Tibial artery (tissue), 4 donors: ENCODE measurements at regions of chr7 and their contacts with region 1.

Region 1: GRCh38 chr7:332646-333392 is 42.8 kb downstream of the FOXL3 start:
- DNase-seq: peak in 1 of 2 donors; percentile 83
- H3K4me3 ChIP-seq: peak overlapping the region; percentile 37 to 47
- H3K27ac ChIP-seq: peak overlapping the region; percentile 37 to 42
- H3K4me1 ChIP-seq: peaks cover 8 to 18% (median 13%) of the 10 kb centered on the region in 4 donors
- H3K27me3 ChIP-seq: peaks cover 0 to 3% of the 10 kb centered on the region in 2 donors
- CTCF ChIP-seq: peak; percentile 86 to 88

Region 2: DNA sequence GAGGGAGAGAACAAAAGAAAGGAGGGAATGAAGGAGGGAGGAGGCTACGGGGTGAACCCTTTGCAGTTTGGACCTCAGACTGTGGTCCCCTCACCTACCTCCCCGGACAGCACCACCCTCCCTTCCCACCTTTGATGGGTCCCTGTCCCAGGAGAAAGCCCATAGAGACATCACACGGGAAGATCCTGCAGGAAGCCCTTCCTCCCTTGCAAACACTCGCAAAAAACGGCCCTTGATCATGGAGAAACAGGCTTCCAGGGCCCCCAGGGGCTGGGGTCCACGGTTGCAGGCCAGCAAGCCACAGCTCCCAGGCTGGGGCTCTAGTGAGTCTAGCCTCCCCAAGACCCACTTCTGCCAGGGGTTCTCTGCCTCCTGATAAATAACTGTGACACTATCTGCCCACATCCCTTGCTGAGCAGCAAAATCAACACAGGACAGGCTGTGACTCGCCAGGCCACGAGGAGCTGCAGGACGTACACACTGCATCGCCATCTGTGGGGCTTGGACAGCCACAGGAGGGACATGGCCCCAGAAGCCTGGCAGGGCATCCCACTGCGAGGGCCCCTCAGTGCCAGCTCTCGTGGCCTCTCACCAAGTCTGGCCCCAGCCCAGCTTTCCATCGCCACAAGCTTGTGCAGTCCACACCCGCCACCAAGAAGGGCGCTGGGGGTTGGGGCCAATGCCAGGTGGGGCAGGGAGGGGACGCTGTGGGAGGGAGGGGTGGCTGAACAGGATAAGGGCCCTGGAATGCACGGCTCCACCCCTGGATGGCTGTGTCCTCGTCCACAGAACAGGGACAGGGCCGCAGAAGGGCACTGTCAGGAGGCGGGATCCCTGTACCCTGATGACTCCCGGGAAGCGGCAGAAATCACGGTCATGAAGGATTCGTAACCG is 152.6 kb after region 1 on chr7:
- intact Hi-C with region 1: loop called (anchors 10 kb)
- DNase-seq: peak; percentile 7 to 62
- H3K4me3 ChIP-seq: no peak overlapping the region
- H3K27ac ChIP-seq: no peak overlapping the region
- H3K4me1 ChIP-seq: peaks cover 0 to 11% (median 0%) of the 10 kb centered on the region in 4 donors
- H3K27me3 ChIP-seq: peaks cover 0 to 3% of the 10 kb centered on the region in 2 donors
- CTCF ChIP-seq: no peak

Region 3: GRCh38 chr7:636396-636795 is 303.6 kb after region 1 on chr7:
- intact Hi-C with region 1: loop called (anchors 5 kb)
- DNase-seq: peak in 1 of 2 donors; percentile 78
- H3K4me3 ChIP-seq: no peak overlapping the region
- H3K27ac ChIP-seq: no peak overlapping the region
- H3K4me1 ChIP-seq: no peaks in the 10 kb centered on the region
- H3K27me3 ChIP-seq: no peaks in the 10 kb centered on the region
- CTCF ChIP-seq: peak; percentile 58 to 70